Activated CD4-positive, alpha-beta T cell treated with anti-CD3 and anti-CD28 coated beads, Interleukin-2, amount 10 ng/mL, durations not matched to agents 24 days and 14 days (primary cell): ENCODE measurements at regions of chr10 and their contacts with region 1.

Region 1: GRCh38 chr10:5629303-5630111 is 36.9 kb downstream of the ASB13 start:
- DNase-seq: peak; percentile 96
- H3K4me3 Mint-ChIP-seq: peak overlapping the region; percentile 50
- H3K27ac Mint-ChIP-seq: peak overlapping the region; percentile 87
- H3K4me1 Mint-ChIP-seq: peaks cover 20% of the 10 kb centered on the region
- H3K27me3 Mint-ChIP-seq: peaks cover 4% of the 10 kb centered on the region

Region 2: GRCh38 chr10:5548527-5549223 is 80.8 kb before region 1 on chr10:
- intact Hi-C with region 1: loop called (anchors 5 kb)
- DNase-seq: peak; percentile 87
- H3K4me3 Mint-ChIP-seq: no peak overlapping the region
- H3K27ac Mint-ChIP-seq: no peak overlapping the region
- H3K4me1 Mint-ChIP-seq: peaks cover 24% of the 10 kb centered on the region
- H3K27me3 Mint-ChIP-seq: peaks cover 9% of the 10 kb centered on the region

Region 3: DNA sequence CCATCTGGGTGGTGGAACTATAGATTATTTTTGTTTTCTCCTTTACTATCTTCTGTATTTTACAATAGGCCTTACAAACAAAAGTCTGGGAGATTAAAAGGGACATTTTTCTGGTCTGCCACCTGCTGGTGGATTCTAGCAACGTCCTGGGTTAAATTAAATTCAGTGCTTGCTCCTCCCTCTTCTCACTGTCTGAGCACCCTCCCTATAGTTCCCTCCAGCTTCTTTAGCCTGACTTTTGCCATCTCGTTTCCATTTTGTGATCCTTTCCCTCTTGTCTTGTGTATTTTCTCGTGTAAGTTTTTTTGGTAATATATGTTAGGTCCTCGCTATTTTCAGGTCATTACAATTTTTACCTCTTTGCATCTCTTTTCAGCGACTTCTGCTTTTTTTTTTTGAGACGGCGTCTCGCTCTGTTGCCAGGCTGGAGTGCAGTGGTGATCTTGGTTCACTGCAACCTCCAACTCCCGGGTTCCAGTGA is 244.0 kb after region 1 on chr10:
- intact Hi-C with region 1: loop called (anchors 2 kb)
- DNase-seq: peak; percentile 91
- H3K4me3 Mint-ChIP-seq: peak overlapping the region; percentile 39
- H3K27ac Mint-ChIP-seq: no peak overlapping the region
- H3K4me1 Mint-ChIP-seq: peaks cover 5% of the 10 kb centered on the region
- H3K27me3 Mint-ChIP-seq: no peaks in the 10 kb centered on the region